Mammary epithelial cell (primary cell): ENCODE measurements at regions of chr11 and their contacts with region 1.

Region 1: GRCh38 chr11:76626921-76627401 is 43.6 kb downstream of the LRRC32 start:
- DNase-seq: peak; percentile 73
- H3K4me3 ChIP-seq: no peak overlapping the region
- H3K27ac ChIP-seq: no peak overlapping the region
- H3K4me1 ChIP-seq: peaks cover 2% of the 10 kb centered on the region
- H3K27me3 ChIP-seq: no peaks in the 10 kb centered on the region
- CTCF ChIP-seq: no peak

Region 2: GRCh38 chr11:76455331-76455730 is 171.6 kb before region 1 on chr11:
- CTCF ChIA-PET with region 1: no interaction called
- dilution Hi-C with region 1: no loop called
- in situ Hi-C with region 1: no loop called
- intact Hi-C with region 1: no loop called
- DNase-seq: no peak
- H3K4me3 ChIP-seq: no peak overlapping the region
- H3K27ac ChIP-seq: no peak overlapping the region
- H3K4me1 ChIP-seq: no peaks in the 10 kb centered on the region
- H3K27me3 ChIP-seq: no peaks in the 10 kb centered on the region
- CTCF ChIP-seq: no peak

Region 3: GRCh38 chr11:76560219-76560618 is 66.7 kb before region 1 on chr11:
- CTCF ChIA-PET with region 1: no interaction called
- dilution Hi-C with region 1: loop called (anchors 5 kb)
- in situ Hi-C with region 1: loop called in 1 of 2 experiments (anchors 10 kb)
- intact Hi-C with region 1: no loop called
- DNase-seq: peak; percentile 37
- H3K4me3 ChIP-seq: no peak overlapping the region
- H3K27ac ChIP-seq: no peak overlapping the region
- H3K4me1 ChIP-seq: no peaks in the 10 kb centered on the region
- H3K27me3 ChIP-seq: no peaks in the 10 kb centered on the region
- CTCF ChIP-seq: no peak

Region 4: GRCh38 chr11:76637491-76638269 is 10.7 kb after region 1 on chr11:
- CTCF ChIA-PET with region 1: no interaction called
- dilution Hi-C with region 1: no loop called
- in situ Hi-C with region 1: no loop called
- intact Hi-C with region 1: no loop called
- DNase-seq: no peak
- H3K4me3 ChIP-seq: no peak overlapping the region
- H3K27ac ChIP-seq: no peak overlapping the region
- H3K4me1 ChIP-seq: no peaks in the 10 kb centered on the region
- H3K27me3 ChIP-seq: peaks cover 3% of the 10 kb centered on the region
- CTCF ChIP-seq: no peak

Region 5: DNA sequence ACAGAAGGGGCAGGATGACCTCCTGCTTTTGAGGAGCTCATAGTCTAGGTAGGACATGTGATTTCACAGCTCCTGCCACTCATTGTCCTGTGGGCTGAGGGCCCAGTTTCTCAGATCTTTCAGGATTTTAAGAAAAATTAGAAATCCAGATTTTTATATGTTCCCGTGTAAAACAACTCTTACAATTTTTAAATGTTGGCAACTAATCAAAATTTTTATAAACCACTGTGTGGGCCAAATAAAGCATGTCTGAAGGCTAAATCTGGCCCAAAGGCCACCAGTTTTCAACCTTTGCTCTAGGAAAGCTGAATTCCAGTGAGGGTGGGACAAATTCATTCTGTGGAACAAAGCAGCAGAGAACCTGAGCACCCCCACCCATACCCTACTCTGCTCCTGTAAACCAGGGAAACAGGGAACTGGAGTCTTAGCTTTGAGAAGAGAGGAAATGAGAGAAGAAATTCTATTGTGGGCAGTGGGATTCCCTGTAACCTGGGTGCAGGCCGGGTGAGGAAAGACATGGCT is 23.0 kb after region 1 on chr11:
- CTCF ChIA-PET with region 1: no interaction called
- dilution Hi-C with region 1: no loop called
- in situ Hi-C with region 1: no loop called
- intact Hi-C with region 1: no loop called
- DNase-seq: no peak
- H3K4me3 ChIP-seq: no peak overlapping the region
- H3K27ac ChIP-seq: no peak overlapping the region
- H3K4me1 ChIP-seq: no peaks in the 10 kb centered on the region
- H3K27me3 ChIP-seq: peaks cover 6% of the 10 kb centered on the region
- CTCF ChIP-seq: no peak

Region 6: DNA sequence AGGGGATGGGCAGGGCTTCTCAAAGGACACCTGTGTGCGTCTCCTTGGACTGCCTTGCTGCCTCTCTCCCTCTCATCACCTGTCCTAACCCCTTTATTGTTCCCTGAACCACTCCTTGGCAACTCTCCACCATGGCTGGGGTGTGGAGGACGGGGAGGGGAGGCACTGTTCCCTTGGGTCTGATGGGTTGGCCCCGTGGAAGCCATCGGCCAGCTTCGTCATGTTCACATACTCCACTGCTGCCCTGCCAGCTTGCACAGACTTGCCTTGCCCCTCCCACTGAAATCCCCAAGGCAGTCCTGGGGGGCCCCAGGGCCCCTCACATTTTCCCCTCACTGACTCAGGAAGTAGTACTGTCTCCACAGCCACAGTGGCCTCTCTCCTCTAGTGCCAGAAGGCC is 79.7 kb after region 1 on chr11:
- CTCF ChIA-PET with region 1: no interaction called
- dilution Hi-C with region 1: loop called (anchors 5 kb)
- in situ Hi-C with region 1: no loop called
- intact Hi-C with region 1: no loop called
- DNase-seq: peak; percentile 17
- H3K4me3 ChIP-seq: no peak overlapping the region
- H3K27ac ChIP-seq: no peak overlapping the region
- H3K4me1 ChIP-seq: no peaks in the 10 kb centered on the region
- H3K27me3 ChIP-seq: no peaks in the 10 kb centered on the region
- CTCF ChIP-seq: no peak

Region 7: GRCh38 chr11:77457340-77457739 is 830.4 kb after region 1 on chr11:
- CTCF ChIA-PET with region 1: no interaction called
- dilution Hi-C with region 1: no loop called
- in situ Hi-C with region 1: no loop called
- intact Hi-C with region 1: no loop called
- DNase-seq: no peak
- H3K4me3 ChIP-seq: no peak overlapping the region
- H3K27ac ChIP-seq: no peak overlapping the region
- H3K4me1 ChIP-seq: no peaks in the 10 kb centered on the region
- H3K27me3 ChIP-seq: no peaks in the 10 kb centered on the region
- CTCF ChIP-seq: no peak